GM12878 (cell line): ENCODE measurements at regions of chr17 and their contacts with region 1.

Region 1: GRCh38 chr17:78745407-78746088 is 36.5 kb downstream of the CYTH1 start:
- DNase-seq: no peak
- ATAC-seq: no peak
- H3K4me3 ChIP-seq: no peak overlapping the region
- H3K27ac ChIP-seq: 0 out of 2 replicates have a peak overlapping the region, but pooled peaks have one; percentile 20
- H3K4me1 ChIP-seq: peaks cover 72% of the 10 kb centered on the region
- H3K27me3 ChIP-seq: no peaks in the 10 kb centered on the region
- CTCF ChIP-seq: peak; percentile 35 to 51 (median 42); a peak in 4 of 6 replicates
- EP300 ChIP-seq: no peak
- POLR2A ChIP-seq: no peak
- RAD21 ChIP-seq: peak; percentile 55

Region 2: DNA sequence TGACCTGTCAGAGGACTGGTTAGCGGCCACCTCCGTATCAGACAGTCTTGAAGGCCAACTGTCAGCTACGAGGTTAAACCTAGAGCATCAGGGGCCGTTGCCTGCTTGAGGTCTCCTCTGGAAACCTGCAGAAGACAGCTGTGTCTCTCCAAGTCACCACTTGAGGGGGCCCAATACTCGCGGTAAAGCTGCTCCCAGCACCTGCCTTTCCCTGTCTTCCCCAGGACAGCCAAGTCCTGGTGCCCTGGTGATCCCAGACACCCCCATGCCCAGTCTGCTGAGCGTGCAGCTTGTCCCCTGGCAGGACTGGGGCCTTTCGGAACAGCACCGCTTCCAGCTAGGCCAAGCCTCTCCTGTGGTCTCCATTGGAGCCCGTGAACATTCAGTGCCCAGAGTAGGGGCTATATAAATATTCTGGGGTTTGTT is 248.4 kb before region 1 on chr17:
- CTCF ChIA-PET with region 1: interaction called, 4 read pairs
- POLR2A ChIA-PET with region 1: no interaction called
- RAD21 ChIA-PET with region 1: interaction called, 3 read pairs
- SMC1A ChIA-PET with region 1: interaction called, 5 read pairs
- in situ Hi-C with region 1: no loop called
- intact Hi-C with region 1: loop called (anchors 2 kb)
- DNase-seq: no peak
- ATAC-seq: peak; percentile 96
- H3K4me3 ChIP-seq: no peak overlapping the region
- H3K27ac ChIP-seq: no peak overlapping the region
- H3K4me1 ChIP-seq: no peaks in the 10 kb centered on the region; the same call in 1 of the 2 replicates
- H3K27me3 ChIP-seq: no peaks in the 10 kb centered on the region
- CTCF ChIP-seq: peak; percentile 81 to 94 (median 86)
- EP300 ChIP-seq: no peak
- POLR2A ChIP-seq: no peak
- RAD21 ChIP-seq: peak; percentile 84

Region 3: DNA sequence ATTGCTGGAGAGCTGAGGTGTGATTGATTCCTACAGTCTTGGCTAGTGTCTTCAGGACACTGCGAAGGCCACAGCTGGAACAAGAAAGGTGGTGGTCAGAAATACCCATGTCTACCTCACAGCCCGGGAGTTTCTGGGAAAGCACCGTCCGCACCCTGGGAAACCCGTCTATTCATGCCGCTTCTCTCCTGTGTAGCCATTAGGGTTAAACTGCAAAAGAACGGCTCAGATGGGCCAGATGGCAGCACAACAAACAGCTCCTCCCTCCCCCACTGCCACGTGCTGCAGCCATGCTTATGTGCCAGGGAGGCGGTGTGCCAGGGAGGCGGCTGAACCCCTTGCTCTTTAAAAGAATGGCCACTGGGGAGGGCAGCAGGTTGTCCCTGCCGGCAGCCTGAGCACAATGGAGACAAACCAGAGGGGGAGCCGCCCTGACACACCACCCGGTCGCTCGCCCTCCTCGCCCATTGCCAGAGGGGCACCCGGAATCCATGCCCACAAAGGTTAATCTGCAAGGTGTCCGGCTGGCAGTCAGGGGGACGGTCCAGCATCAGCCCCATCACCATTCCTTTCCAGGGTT is 28.6 kb before region 1 on chr17:
- CTCF ChIA-PET with region 1: interaction called, 78 read pairs
- POLR2A ChIA-PET with region 1: interaction called, 384 read pairs
- RAD21 ChIA-PET with region 1: interaction called, 537 read pairs
- SMC1A ChIA-PET with region 1: interaction called, 490 read pairs
- in situ Hi-C with region 1: no loop called
- intact Hi-C with region 1: no loop called
- DNase-seq: no peak
- ATAC-seq: peak; percentile 63
- H3K4me3 ChIP-seq: peak overlapping the region; percentile 37
- H3K27ac ChIP-seq: peak overlapping the region; percentile 87
- H3K4me1 ChIP-seq: peaks cover 63% of the 10 kb centered on the region
- H3K27me3 ChIP-seq: no peaks in the 10 kb centered on the region
- CTCF ChIP-seq: no peak
- EP300 ChIP-seq: no peak
- POLR2A ChIP-seq: peak; percentile 26
- RAD21 ChIP-seq: no peak

Region 4: GRCh38 chr17:78769196-78769773 is 23.7 kb after region 1 on chr17:
- CTCF ChIA-PET with region 1: interaction called, 76 read pairs
- POLR2A ChIA-PET with region 1: interaction called, 131 read pairs
- RAD21 ChIA-PET with region 1: interaction called, 24 read pairs
- SMC1A ChIA-PET with region 1: interaction called, 41 read pairs
- in situ Hi-C with region 1: no loop called
- intact Hi-C with region 1: no loop called
- DNase-seq: no peak
- ATAC-seq: peak; percentile 54
- H3K4me3 ChIP-seq: no peak overlapping the region
- H3K27ac ChIP-seq: peak overlapping the region; percentile 53
- H3K4me1 ChIP-seq: peaks cover 66% of the 10 kb centered on the region
- H3K27me3 ChIP-seq: no peaks in the 10 kb centered on the region
- CTCF ChIP-seq: peak; percentile 36 to 45 (median 45)
- EP300 ChIP-seq: no peak
- POLR2A ChIP-seq: peak; percentile 54; the same call in 1 of the 2 replicates
- RAD21 ChIP-seq: 0 out of 2 replicates have a peak, but pooled peaks have one; percentile 20

Region 5: DNA sequence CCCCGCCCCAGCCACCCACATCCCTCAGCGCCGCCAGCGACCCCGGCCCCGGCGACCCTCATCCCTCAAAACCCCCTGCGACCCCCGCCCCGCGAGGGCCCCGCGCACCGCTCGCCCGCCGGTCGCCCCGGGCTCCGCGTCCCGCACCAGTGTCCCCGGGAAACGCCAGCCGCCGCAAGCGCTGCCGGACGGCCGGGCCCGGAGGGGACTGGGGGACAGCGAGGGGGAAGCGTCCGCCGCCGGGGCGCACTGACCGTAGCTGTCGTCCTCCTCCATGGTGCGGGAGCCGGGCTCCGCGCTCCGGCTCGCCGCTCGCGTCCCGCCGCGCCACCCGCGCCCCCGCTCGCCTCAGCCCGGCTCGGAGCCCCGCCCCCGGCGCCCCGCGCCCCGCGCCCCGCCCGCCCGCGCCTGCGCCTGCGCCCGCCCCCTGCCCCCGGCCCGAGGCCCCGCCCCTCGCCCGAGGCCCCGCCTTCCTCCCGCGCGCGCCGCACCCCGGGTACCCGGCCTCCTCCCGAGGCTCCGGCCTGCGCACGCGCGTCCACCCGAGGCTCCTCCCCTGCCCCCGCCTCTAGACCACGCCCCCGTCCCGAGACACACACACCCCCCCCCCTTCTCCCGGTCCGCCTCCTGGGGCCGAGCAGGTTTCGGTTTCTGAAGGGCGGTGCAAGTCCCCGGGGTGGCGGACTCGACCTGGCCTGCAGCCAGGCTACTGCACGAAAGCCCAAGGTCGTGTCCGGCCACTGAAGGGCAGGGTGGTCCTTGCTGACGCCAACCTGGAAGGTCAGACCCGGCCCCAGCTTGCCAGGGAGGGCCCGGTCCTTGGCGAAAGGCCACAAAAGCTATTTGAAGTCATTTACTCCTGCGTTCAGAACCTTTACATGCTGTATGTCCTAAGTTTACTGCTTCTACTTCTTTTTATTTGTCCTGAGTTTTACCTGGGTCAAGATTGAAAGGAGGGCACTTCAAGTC is 36.7 kb after region 1 on chr17 and contains the start of gene CYTH1:
- CTCF ChIA-PET with region 1: interaction called, 3 read pairs
- POLR2A ChIA-PET with region 1: interaction called, 5 read pairs
- RAD21 ChIA-PET with region 1: interaction called, 23 read pairs
- SMC1A ChIA-PET with region 1: interaction called, 12 read pairs
- in situ Hi-C with region 1: no loop called
- intact Hi-C with region 1: loop called (anchors 1 kb)
- DNase-seq: no peak
- ATAC-seq: peak; percentile 54
- H3K4me3 ChIP-seq: peak within 1 kb of the TSS; percentile 89
- H3K27ac ChIP-seq: peak within 1 kb of the TSS; percentile 97
- H3K4me1 ChIP-seq: peaks cover 6% of the 10 kb centered on the region; the same call in 1 of the 2 replicates
- H3K27me3 ChIP-seq: no peaks in the 10 kb centered on the region
- CTCF ChIP-seq: no peak
- EP300 ChIP-seq: no peak
- POLR2A ChIP-seq: peak; percentile 85
- RAD21 ChIP-seq: 0 out of 2 replicates have a peak, but pooled peaks have one; percentile 1
- polyA plus RNA-seq, gene CYTH1: 6.6 to 11.8 TPM